ENCODE measurements at regions of chr17 and their contacts with region 1.

Region 1: DNA sequence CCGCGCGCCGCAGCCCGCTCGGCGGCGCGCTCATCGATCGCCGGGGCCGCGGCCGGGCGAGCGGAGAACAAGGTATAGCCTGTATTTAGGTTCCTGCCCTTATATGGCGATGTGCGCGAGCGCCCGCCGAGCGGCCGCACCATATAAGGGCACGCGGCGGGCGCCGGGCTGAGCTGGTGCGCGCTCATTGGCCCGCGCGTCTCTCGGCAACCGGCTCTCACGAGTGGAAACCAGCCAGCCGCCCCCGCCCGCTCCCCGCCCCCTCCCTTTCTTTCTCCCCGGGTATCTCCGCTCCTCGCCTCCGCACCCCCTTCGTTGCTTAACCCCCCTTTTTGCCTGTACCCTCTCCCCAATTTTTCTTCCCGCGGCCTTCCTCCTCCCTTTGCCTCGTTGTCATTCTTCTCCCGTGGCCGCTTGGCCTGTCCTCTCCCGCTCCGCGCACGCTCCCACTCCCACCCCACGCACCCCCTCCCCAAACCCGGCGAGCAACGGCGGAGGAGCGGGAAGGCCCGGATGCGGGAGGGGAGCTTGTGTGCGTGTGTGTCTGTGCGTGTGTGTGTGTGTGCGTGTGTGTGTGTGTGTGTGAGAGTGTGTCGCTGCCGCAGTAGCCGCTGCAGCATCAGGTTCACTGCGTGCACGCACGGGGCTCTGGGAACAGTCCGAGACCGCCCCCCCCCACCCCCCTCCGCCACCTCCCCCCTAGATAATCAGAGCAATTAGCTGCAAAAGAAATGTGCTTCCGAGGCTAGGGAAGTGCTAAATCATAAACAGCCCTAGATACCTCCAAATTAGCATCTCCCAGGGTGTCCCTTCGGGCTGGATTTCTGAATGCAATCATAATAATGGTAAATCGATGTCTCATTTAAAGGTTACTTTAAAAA is 13.5 kb upstream of the CBX8 start:
- DNase-seq: peak; percentile 56 to 84 (median 74)
- ATAC-seq: peak; percentile 94
- H3K4me3 ChIP-seq: no peak overlapping the region
- H3K4me3 Mint-ChIP-seq: peak overlapping the region in 9 of 10 donors; percentile 39 to 75 (median 55)
- H3K27ac ChIP-seq: no peak overlapping the region
- H3K27ac Mint-ChIP-seq: peak overlapping the region in 4 of 9 donors; percentile 9 to 78 (median 22)
- H3K4me1 ChIP-seq: peaks cover 23 to 40% of the 10 kb centered on the region in 2 donors
- H3K4me1 Mint-ChIP-seq: peaks cover 18 to 40% (median 32%) of the 10 kb centered on the region in 7 donors
- H3K27me3 ChIP-seq: peaks cover 40 to 73% of the 10 kb centered on the region in 2 donors
- H3K27me3 Mint-ChIP-seq: peaks cover 53 to 74% (median 59%) of the 10 kb centered on the region in 5 donors

Region 2: DNA sequence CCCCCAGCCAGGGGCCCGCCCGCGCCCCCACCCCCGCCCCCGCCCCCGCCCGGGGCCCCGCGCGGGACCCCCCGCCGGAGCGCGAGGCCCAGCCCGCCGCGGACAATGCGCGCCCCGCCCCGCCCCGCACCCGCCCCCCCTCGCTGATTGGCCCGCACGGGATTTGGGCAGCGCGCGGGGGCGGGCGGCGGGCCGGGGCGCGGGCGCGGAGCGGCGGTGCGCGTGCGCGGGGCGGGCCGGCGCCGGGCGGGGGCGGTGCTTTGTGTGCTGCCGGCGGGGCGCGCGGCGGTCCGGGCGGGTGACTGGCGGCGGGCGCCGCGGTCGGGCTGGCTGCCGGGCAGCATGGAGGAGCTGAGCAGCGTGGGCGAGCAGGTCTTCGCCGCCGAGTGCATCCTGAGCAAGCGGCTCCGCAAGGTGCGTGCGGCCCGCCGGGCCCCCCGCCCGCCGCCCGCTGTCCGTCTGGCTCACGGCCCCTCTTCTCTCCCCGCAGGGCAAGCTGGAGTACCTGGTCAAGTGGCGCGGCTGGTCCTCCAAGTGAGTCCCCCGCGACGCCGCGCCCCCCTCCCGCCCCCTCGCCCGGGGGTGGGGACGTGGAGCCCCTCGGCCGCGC is 32.4 kb before region 1 on chr17 and contains the start of gene CBX2:
- CTCF ChIA-PET with region 1: no interaction called
- POLR2A ChIA-PET with region 1: interaction called, 4 read pairs
- intact Hi-C with region 1: loop called in 1 of 2 experiments (anchors 5 kb)
- DNase-seq: peak; percentile 58 to 92 (median 77)
- ATAC-seq: peak; percentile 95
- H3K4me3 ChIP-seq: peak within 1 kb of the TSS; percentile 28
- H3K4me3 Mint-ChIP-seq: peak within 1 kb of the TSS; percentile 80 to 92 (median 86)
- H3K27ac ChIP-seq: no peak within 1 kb of the TSS
- H3K27ac Mint-ChIP-seq: peak within 1 kb of the TSS in 8 of 9 donors; percentile 32 to 89 (median 72)
- H3K4me1 ChIP-seq: peaks cover 7 to 10% of the 10 kb centered on the region in 2 donors
- H3K4me1 Mint-ChIP-seq: peaks cover 10 to 37% (median 24%) of the 10 kb centered on the region in 7 donors
- H3K27me3 ChIP-seq: peaks cover 11 to 26% of the 10 kb centered on the region in 2 donors
- H3K27me3 Mint-ChIP-seq: peaks cover 72 to 84% (median 77%) of the 10 kb centered on the region in 5 donors
- total RNA-seq, gene CBX2: 0.24 to 4.4 (median 0.41) TPM

Region 3: GRCh38 chr17:79970576-79971068 is 160.3 kb after region 1 on chr17:
- CTCF ChIA-PET with region 1: interaction called, 4 read pairs
- POLR2A ChIA-PET with region 1: interaction called, 3 read pairs
- intact Hi-C with region 1: loop called in 1 of 2 experiments (anchors 1 kb)
- DNase-seq: peak in 6 of 9 donors; percentile 30 to 49 (median 41)
- ATAC-seq: peak; percentile 54
- H3K4me3 ChIP-seq: no peak overlapping the region
- H3K4me3 Mint-ChIP-seq: no peak overlapping the region
- H3K27ac ChIP-seq: no peak overlapping the region
- H3K27ac Mint-ChIP-seq: no peak overlapping the region
- H3K4me1 ChIP-seq: no peaks in the 10 kb centered on the region
- H3K4me1 Mint-ChIP-seq: peaks cover 0 to 9% (median 0%) of the 10 kb centered on the region in 7 donors
- H3K27me3 ChIP-seq: no peaks in the 10 kb centered on the region
- H3K27me3 Mint-ChIP-seq: peaks cover 0 to 20% (median 7%) of the 10 kb centered on the region in 5 donors

Region 4: DNA sequence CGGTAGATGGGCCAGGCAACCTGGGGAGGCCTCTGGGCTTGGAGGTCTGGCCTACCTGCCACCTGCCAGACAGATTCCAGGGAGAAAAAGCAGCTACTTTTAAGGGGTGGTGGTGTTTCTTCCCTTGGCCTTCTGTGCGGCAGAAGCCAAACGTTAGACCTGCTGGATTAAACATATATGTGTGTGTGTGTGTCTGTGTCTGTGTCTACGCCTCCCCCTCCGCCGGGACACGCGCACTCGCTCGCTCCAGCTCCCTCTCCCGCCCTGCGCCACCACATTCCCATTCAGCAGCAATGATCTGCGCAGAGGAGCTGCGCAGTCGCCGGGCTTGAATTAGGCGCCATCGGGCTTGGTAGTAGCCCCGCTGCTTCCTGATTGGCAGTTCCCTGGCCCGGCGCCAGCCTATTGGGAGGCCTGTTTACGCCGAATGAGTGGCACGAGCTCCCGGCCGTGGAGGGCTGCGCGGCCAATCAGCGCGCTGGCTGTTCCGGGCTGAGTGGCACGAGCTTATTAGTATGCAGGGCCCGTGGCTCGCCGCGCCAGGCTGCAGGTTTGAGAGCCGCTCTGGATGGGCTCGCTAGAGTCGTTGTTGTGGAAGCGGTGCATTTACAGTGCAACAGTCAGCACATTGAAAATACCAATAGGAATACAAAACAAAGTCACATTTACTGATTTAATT is 1584.7 kb after region 1 on chr17 and contains the start of gene BAHCC1:
- CTCF ChIA-PET with region 1: no interaction called
- POLR2A ChIA-PET with region 1: no interaction called
- intact Hi-C with region 1: loop called in 1 of 2 experiments (anchors 10 kb)
- DNase-seq: peak; percentile 47 to 68 (median 63)
- ATAC-seq: peak; percentile 82
- H3K4me3 ChIP-seq: no peak within 1 kb of the TSS
- H3K4me3 Mint-ChIP-seq: peak within 1 kb of the TSS; percentile 47 to 69 (median 59)
- H3K27ac ChIP-seq: no peak within 1 kb of the TSS
- H3K27ac Mint-ChIP-seq: peak within 1 kb of the TSS in 7 of 9 donors; percentile 17 to 84 (median 54)
- H3K4me1 ChIP-seq: peaks cover 46% of the 10 kb centered on the region in 2 donors
- H3K4me1 Mint-ChIP-seq: peaks cover 0 to 48% (median 21%) of the 10 kb centered on the region in 7 donors
- H3K27me3 ChIP-seq: peaks cover 28 to 64% of the 10 kb centered on the region in 2 donors
- H3K27me3 Mint-ChIP-seq: peaks cover 31 to 66% (median 46%) of the 10 kb centered on the region in 5 donors
- total RNA-seq, gene BAHCC1: 0.05 to 3.8 (median 0.68) TPM in 4 of 5 experiments, not detected in the other

Measured in naive thymus-derived CD4-positive, alpha-beta T cell (primary cell).